B cell (primary cell): ENCODE measurements at regions of chr6 and their contacts with region 1.

Region 1: DNA sequence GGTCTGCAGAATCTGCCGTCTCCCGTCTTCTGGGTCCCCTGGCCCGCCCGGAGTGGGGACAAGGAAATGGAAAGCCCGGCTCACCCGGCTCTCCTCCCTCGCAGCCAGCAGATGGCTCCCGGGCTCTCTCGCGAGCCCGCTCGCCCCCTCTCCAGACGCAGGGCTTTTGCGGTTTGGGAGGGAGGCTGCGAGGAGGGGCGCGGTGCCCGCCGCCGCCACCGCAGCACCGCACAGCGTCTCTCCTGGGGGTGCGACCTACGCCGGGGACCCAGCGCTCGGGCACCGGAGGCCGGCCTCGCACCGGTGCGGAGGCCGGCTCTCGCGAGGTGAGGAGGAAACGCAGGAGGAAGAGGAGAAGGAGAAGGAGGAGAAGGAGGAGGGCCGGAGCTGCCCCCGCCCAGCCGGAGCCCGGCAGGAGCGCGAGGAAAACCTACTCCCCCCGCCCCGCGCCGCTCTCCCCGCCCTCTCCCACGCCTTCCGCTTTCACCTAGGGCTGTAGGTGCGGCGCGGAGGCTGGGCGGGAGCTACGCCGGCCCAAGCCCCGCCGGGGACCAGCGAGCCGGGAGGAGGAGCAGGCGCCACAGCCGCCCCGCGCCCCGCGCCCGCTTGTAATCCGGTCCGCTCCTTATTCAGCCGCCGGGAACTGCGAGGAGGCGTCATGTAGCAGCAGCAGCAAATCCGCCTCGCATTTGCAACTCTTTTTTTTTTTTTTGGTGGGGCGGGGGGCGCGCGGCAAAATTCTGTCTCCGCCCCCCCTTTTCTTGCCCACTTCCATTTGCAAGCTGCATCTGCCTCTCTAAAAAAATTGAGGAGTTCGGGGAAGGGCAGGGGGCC is at the start of gene CARMIL1:
- DNase-seq: peak; percentile 79
- ATAC-seq: peak; percentile 82
- H3K4me3 ChIP-seq: peak within 1 kb of the TSS; percentile 61 to 86 (median 83)
- H3K4me3 Mint-ChIP-seq: peak within 1 kb of the TSS; percentile 96
- H3K27ac ChIP-seq: peak within 1 kb of the TSS; percentile 39 to 66
- H3K27ac Mint-ChIP-seq: peak within 1 kb of the TSS; percentile 89
- H3K4me1 ChIP-seq: peaks cover 23 to 30% of the 10 kb centered on the region in 2 donors
- H3K4me1 Mint-ChIP-seq: peaks cover 34% of the 10 kb centered on the region
- H3K27me3 ChIP-seq: no peaks in the 10 kb centered on the region
- H3K27me3 Mint-ChIP-seq: peaks cover 5% of the 10 kb centered on the region
- CTCF ChIP-seq: peak; percentile 53
- total RNA-seq, gene CARMIL1: 7.5 and 9.0 TPM in 2 replicates

Region 2: DNA sequence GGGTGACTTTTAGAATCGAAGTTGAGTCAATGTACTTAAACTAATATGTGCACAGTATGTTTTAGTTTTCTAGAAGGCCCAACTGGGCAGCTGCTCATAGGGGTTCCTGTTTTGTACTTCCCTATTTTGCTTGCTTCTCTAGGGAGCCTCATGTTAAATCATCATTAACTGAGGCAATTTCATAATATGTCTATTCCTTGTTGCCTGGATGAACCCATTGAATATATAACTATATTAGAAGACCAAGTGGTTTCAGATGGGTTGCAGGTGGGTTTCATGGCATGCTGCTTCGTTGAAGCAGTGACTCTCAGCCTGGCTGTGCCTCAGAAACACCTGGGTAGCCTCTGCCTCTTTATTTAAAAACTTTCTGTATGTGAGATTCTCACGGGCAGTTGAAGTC is 22.2 kb after region 1 on chr6:
- CTCF ChIA-PET with region 1: interaction called, 17 read pairs
- POLR2A ChIA-PET with region 1: interaction called, 5 read pairs
- intact Hi-C with region 1: loop called (anchors 2 kb)
- DNase-seq: peak; percentile 63
- ATAC-seq: peak; percentile 86
- H3K4me3 ChIP-seq: peak overlapping the region in 1 of 5 experiments; percentile 31
- H3K4me3 Mint-ChIP-seq: peak overlapping the region; percentile 1
- H3K27ac ChIP-seq: peak overlapping the region; percentile 50 to 51
- H3K27ac Mint-ChIP-seq: peak overlapping the region; percentile 78
- H3K4me1 ChIP-seq: peaks cover 51 to 53% of the 10 kb centered on the region in 2 donors
- H3K4me1 Mint-ChIP-seq: peaks cover 63% of the 10 kb centered on the region
- H3K27me3 ChIP-seq: no peaks in the 10 kb centered on the region
- H3K27me3 Mint-ChIP-seq: no peaks in the 10 kb centered on the region
- CTCF ChIP-seq: no peak

Region 3: DNA sequence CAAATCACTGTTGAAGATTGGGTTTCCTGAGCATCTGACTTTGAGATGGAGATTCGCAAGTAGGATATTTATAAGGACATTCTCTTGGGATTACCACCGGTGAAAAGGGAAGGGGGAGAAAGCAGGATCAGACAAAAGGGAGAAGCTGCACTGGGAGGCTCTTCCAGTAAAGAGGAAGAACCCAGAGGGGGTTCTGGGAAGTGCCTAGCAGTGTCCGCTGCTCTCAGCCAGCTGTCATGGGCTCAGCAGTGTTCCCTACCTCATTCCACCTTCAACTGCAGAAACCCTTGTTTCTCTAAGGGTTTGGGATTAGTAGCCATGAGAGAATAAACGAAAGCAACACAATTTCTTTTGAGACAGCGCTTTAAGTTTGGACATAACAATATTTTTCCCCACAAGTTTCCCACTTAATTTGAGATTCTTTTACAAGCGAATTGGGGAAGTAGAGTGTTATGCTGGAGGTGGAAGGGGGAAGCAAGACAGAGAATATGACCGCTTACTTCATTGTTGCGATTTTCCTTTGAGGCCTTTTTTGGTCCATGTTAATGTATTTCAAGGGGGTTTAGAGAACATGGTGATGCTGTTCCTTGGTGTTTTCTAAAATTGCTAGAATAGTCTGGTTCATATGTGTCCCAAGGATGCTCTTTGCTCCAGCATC is 218.4 kb after region 1 on chr6:
- CTCF ChIA-PET with region 1: interaction called, 212 read pairs
- POLR2A ChIA-PET with region 1: no interaction called
- intact Hi-C with region 1: no loop called
- DNase-seq: no peak
- ATAC-seq: no peak
- H3K4me3 ChIP-seq: no peak overlapping the region
- H3K4me3 Mint-ChIP-seq: no peak overlapping the region
- H3K27ac ChIP-seq: no peak overlapping the region
- H3K27ac Mint-ChIP-seq: no peak overlapping the region
- H3K4me1 ChIP-seq: no peaks in the 10 kb centered on the region
- H3K4me1 Mint-ChIP-seq: no peaks in the 10 kb centered on the region
- H3K27me3 ChIP-seq: no peaks in the 10 kb centered on the region
- H3K27me3 Mint-ChIP-seq: no peaks in the 10 kb centered on the region
- CTCF ChIP-seq: no peak